Activated CD4-positive, alpha-beta T cell treated with anti-CD3 and anti-CD28 coated beads, Interleukin-2, amount 10 ng/mL, durations not matched to agents 24 days and 14 days (primary cell): ENCODE measurements at regions of chr12 and their contacts with region 1.

Region 1: DNA sequence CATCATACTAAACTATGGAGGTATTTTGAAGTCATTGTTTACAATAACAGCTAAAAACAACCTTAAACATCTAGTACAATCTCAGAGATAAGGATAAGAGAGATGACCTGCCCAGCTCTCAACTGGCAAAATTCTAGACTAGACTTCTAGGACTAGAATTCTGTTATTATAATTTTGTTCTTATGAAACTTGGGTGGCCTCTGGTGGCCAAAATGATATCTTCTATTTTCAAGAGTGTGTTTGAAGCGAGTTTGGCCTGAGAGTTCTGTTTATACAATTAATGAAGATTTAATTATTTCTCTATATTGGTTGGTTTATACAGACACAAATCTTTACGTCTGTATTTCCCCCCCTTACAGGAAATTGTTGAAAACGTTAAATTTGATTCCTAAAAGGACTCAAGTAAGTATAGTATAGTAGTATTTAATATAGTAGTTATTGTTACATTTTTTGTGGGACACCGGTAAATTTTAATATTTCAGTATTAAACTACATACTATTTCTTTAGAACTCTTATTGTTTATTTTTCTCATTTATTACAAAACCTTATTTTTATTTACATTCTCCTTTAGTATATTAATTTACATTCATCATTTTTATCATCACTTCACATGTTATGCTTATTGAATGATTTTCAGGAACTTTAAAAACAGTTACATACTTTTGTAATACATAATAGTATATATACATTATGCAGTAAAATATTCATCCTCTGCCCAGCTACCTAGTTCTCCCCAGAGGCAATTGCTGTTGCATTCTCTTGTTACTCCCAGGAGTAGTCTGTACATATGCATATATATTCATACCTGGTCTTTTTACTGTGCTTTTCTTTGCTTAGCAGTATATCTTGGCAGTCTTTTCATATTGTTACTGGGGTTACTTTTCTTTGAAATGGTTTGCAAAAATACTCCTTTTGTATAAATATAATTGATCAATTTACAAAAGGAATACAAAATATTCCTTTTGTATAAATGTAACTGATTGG is 6.6 kb downstream of the PPHLN1 start:
- DNase-seq: peak; percentile 77
- H3K4me3 Mint-ChIP-seq: no peak overlapping the region
- H3K27ac Mint-ChIP-seq: no peak overlapping the region
- H3K4me1 Mint-ChIP-seq: peaks cover 31% of the 10 kb centered on the region
- H3K27me3 Mint-ChIP-seq: no peaks in the 10 kb centered on the region

Region 2: DNA sequence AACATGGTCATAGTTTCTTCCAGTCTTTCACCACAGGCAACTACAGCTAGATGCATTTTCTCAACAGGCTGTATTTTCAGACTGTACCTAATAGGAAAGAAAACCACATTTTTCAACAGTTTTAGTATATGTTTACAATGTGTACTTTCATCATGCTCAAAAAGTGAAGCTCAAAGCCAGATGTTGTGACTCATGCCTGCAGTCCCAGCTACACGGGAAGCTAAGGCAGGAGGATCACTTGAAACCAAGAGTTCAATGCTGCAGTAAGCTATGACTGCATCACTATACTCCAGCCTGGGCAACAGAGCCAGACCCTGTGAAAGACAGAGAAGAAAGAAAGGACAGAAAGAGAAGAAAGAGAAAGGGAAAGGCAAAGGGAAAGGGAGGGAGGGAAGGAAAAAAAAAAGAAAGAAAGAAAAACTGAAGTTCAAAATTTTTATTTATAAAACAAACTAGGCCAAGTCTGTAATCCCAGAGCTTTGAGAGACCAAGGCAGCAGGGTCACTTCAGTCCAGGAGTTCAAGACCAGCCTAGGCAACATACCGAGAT is 213.4 kb before region 1 on chr12:
- intact Hi-C with region 1: no loop called
- DNase-seq: no peak
- H3K4me3 Mint-ChIP-seq: no peak overlapping the region
- H3K27ac Mint-ChIP-seq: no peak overlapping the region
- H3K4me1 Mint-ChIP-seq: peaks cover 8% of the 10 kb centered on the region
- H3K27me3 Mint-ChIP-seq: no peaks in the 10 kb centered on the region

Region 3: GRCh38 chr12:42129595-42130204 is 202.9 kb before region 1 on chr12:
- intact Hi-C with region 1: loop called (anchors 1 kb)
- DNase-seq: peak; percentile 62
- H3K4me3 Mint-ChIP-seq: no peak overlapping the region
- H3K27ac Mint-ChIP-seq: no peak overlapping the region
- H3K4me1 Mint-ChIP-seq: peaks cover 13% of the 10 kb centered on the region
- H3K27me3 Mint-ChIP-seq: no peaks in the 10 kb centered on the region

Region 4: DNA sequence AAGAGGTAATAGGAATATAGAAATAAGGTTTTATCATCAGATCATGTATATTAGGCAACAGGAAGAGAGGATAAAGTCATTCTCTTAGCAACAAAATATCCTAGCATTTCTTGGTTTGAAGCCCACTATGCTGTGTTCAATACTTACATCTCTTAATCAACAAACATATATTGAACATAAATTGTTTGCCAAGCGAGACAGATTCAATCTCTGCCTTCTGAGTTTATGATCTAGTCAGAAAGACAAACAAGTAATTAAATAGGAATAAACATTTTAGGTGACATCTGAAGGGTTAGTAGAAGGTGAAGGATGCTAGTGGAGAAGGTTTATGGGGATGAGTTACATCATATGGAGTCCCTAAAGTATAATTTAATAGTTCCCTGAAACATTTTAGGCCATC is 48.1 kb after region 1 on chr12:
- intact Hi-C with region 1: no loop called
- DNase-seq: no peak
- H3K4me3 Mint-ChIP-seq: no peak overlapping the region
- H3K27ac Mint-ChIP-seq: no peak overlapping the region
- H3K4me1 Mint-ChIP-seq: peaks cover 16% of the 10 kb centered on the region
- H3K27me3 Mint-ChIP-seq: no peaks in the 10 kb centered on the region